ENCODE measurements at regions of chrX and their contacts with region 1.

Region 1: GRCh38 chrX:108186811-108187210 is 95.2 kb downstream of the ATG4A start:
- DNase-seq: no peak
- ATAC-seq: no peak
- H3K4me3 Mint-ChIP-seq: no peak overlapping the region
- H3K27ac Mint-ChIP-seq: no peak overlapping the region
- H3K4me1 Mint-ChIP-seq: no peaks in the 10 kb centered on the region
- H3K27me3 Mint-ChIP-seq: no peaks in the 10 kb centered on the region
- CTCF ChIP-seq: no peak

Region 2: DNA sequence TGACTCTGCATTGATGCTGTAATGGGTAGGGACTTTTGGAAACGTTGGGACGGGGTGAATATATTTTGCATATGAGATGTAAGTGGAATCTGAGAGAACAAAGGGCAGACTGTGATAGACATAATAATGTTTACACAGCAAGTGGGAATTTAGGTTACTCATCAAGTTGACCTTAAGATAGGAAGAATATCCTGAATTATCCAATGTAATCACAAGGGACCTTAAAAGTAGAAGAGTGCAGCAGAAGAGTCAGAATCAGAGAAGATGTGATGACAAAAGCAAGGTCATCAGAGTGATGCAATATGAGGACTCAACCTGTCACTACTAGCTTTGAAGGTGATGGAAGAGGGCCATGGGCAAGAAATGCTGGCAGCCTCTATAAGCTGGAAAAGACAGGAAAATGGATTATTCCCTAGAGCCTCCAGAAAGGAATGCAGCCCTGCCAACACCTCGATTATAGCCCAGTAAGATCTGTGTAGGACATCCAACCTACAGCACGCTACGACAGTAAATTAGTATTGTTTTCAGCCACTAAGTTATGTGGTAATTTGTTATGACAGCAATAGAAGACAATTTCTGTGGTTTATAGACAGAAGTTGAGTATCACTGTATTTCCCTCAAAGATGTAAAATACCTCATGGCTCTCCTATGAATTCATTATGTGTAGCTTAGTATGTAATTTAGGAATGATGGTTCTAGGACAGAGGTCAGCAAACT is 1213.2 kb before region 1 on chrX:
- CTCF ChIA-PET with region 1: no interaction called
- POLR2A ChIA-PET with region 1: no interaction called
- intact Hi-C with region 1: loop called (anchors 10 kb)
- DNase-seq: no peak
- ATAC-seq: no peak
- H3K4me3 Mint-ChIP-seq: no peak overlapping the region
- H3K27ac Mint-ChIP-seq: no peak overlapping the region
- H3K4me1 Mint-ChIP-seq: no peaks in the 10 kb centered on the region
- H3K27me3 Mint-ChIP-seq: no peaks in the 10 kb centered on the region
- CTCF ChIP-seq: no peak

Region 3: DNA sequence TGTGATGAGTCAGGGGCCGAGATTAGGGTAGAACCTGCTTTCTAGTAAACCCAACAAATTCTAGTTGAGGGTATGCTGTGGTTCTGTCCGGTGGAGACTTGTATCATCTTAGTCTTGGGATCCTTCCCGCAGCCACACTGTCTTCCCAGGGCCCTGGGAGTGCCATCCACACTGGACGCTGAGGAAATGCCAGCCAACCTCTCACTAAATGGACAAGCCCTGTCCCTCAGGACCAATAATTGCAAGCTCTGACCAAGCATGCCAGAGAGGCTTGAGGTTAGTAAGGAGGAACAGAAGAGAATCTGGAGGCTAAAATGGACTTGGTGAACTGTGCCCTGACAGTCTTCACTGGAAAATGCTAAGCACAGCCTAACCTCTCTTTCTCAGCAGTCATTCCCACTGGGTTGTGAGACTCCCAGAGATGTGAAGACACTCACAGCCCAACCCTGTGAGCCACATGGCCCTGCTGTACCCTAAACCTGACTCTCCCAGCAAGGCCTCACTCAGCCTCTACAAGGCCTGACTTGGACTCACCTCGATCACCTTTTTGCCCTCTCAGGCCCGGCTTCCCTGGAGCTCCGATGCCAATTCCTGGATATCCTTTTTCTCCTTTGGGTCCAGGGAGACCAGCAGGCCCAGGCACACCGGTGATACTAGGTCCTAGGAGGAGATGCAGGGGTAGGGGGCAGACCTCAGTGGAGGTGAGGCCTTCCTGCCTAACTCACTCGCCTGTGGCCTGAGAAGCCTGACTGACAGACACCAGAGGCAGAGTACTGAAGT is 17.7 kb before region 1 on chrX:
- CTCF ChIA-PET with region 1: no interaction called
- POLR2A ChIA-PET with region 1: no interaction called
- intact Hi-C with region 1: no loop called
- DNase-seq: no peak
- ATAC-seq: no peak
- H3K4me3 Mint-ChIP-seq: no peak overlapping the region
- H3K27ac Mint-ChIP-seq: no peak overlapping the region
- H3K4me1 Mint-ChIP-seq: no peaks in the 10 kb centered on the region
- H3K27me3 Mint-ChIP-seq: no peaks in the 10 kb centered on the region
- CTCF ChIP-seq: no peak

Region 4: GRCh38 chrX:108209006-108209554 is 22.3 kb after region 1 on chrX:
- CTCF ChIA-PET with region 1: no interaction called
- POLR2A ChIA-PET with region 1: no interaction called
- intact Hi-C with region 1: no loop called
- DNase-seq: no peak
- ATAC-seq: no peak
- H3K4me3 Mint-ChIP-seq: no peak overlapping the region
- H3K27ac Mint-ChIP-seq: no peak overlapping the region
- H3K4me1 Mint-ChIP-seq: no peaks in the 10 kb centered on the region
- H3K27me3 Mint-ChIP-seq: peaks cover 3% of the 10 kb centered on the region
- CTCF ChIP-seq: no peak

Region 5: DNA sequence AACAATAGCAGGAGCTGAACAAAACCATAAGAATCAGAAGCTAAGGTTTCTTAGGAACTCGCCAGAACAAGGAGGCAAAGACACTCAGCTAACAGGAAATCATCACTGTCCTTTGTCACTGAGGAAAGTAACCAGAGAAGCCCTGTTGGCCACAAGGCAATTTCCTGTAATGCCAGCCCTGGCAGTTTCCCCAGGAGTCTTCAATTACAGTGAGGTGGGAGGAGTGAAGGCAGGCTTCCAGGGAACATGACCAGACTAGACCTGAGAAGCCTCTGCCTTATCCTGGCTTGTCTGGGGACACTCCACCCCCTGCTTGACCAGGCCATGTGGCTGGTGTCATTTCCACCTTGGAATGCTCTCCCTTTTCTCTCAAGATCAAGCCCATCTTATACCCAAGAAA is 126.1 kb after region 1 on chrX:
- CTCF ChIA-PET with region 1: no interaction called
- POLR2A ChIA-PET with region 1: no interaction called
- intact Hi-C with region 1: no loop called
- DNase-seq: no peak
- ATAC-seq: no peak
- H3K4me3 Mint-ChIP-seq: no peak overlapping the region
- H3K27ac Mint-ChIP-seq: no peak overlapping the region
- H3K4me1 Mint-ChIP-seq: no peaks in the 10 kb centered on the region
- H3K27me3 Mint-ChIP-seq: no peaks in the 10 kb centered on the region
- CTCF ChIP-seq: no peak

Measured in activated CD8-positive, alpha-beta T cell treated with anti-CD3 and anti-CD28 coated beads for 36 hours (primary cell).